A673 (cell line): ENCODE measurements at regions of chr17 and their contacts with region 1.

Region 1: DNA sequence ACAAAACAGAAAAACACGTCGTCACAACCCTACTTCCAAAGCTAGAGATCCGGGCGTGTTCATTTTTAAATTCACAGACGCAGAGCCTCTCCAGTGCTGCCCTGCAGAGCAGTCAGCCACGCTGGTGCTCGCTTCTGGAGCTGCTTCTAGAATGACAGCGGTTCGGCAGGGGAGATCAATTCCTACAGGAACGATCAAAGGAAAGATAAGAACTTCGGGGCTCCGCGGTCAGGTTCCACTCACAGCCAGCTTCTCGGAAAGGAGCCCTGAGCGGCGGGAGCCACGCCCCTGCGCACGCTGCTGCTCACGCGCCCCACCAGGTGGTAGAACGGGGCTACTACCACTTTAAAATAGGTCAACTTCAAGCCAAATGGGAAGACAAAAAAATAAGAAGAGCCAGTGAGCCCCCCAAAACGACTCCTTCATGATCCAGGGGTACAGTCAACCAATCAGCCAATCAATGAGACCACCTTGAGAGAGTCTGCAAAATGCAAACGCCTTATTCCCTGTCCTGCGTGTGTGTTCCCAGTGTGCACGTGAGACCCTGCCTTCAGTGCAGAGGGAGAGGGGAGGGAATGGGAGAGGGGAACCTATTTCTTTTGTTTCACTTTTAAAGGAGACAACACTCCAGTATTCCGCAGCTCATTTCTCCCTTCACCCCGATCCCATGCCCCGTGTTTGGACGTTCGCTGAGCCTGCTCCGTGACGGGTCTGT is 209.7 kb downstream of the RBFOX3 start:
- DNase-seq: peak; percentile 71
- H3K4me3 ChIP-seq: no peak overlapping the region
- H3K27ac ChIP-seq: no peak overlapping the region
- H3K4me1 ChIP-seq: no peaks in the 10 kb centered on the region
- H3K27me3 ChIP-seq: peaks cover 72% of the 10 kb centered on the region
- CTCF ChIP-seq: peak; percentile 89

Region 2: GRCh38 chr17:78241277-78242023 is 1159.7 kb before region 1 on chr17:
- CTCF ChIA-PET with region 1: no interaction called
- POLR2A ChIA-PET with region 1: no interaction called
- intact Hi-C with region 1: no loop called
- DNase-seq: peak; percentile 59
- H3K4me3 ChIP-seq: no peak overlapping the region
- H3K27ac ChIP-seq: no peak overlapping the region
- H3K4me1 ChIP-seq: no peaks in the 10 kb centered on the region
- H3K27me3 ChIP-seq: no peaks in the 10 kb centered on the region
- CTCF ChIP-seq: no peak

Region 3: DNA sequence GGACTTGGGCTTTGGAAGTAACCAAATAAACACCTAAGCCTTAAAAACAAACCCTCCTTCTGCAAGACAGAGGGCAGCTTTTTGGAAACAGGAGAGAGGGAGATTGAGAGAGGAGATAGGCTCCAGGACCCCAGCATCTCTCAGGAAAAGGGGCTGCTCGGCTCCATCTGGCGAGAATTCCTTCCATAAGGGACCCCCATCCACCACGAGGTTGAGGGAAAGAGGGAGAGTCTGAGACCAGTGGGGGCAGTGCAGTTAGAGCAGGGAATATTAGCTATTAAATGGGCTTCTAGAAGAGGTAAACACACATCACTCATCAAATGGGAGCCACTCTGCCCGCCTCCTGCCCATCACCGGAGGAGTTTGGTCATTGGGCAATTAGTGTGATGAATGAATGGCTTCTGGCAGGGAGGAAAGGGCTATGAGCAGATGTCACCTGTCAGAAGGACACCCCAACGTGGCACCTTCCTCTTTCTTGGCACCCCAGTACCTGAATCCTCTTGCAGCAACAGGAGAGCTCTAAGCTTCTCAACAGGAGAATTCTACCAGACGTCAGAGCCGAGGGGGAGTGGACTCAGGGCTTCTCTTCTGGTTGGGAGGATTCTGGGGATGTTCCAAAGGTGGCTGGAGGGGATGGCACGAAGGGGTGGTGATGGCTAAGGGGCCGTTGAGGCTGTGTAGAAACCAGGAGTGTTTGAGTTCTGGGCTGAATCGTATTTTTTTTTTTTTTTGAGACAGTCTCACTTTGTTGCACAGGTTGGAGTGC is 366.2 kb before region 1 on chr17:
- CTCF ChIA-PET with region 1: no interaction called
- POLR2A ChIA-PET with region 1: interaction called, 17 read pairs
- intact Hi-C with region 1: no loop called
- DNase-seq: no peak
- H3K4me3 ChIP-seq: no peak overlapping the region
- H3K27ac ChIP-seq: no peak overlapping the region
- H3K4me1 ChIP-seq: no peaks in the 10 kb centered on the region
- H3K27me3 ChIP-seq: no peaks in the 10 kb centered on the region
- CTCF ChIP-seq: no peak

Region 4: GRCh38 chr17:79294459-79295071 is 106.6 kb before region 1 on chr17:
- CTCF ChIA-PET with region 1: no interaction called
- POLR2A ChIA-PET with region 1: interaction called, 13 read pairs
- intact Hi-C with region 1: no loop called
- DNase-seq: peak; percentile 59
- H3K4me3 ChIP-seq: no peak overlapping the region
- H3K27ac ChIP-seq: no peak overlapping the region
- H3K4me1 ChIP-seq: no peaks in the 10 kb centered on the region
- H3K27me3 ChIP-seq: peaks cover 75% of the 10 kb centered on the region
- CTCF ChIP-seq: no peak

Region 5: GRCh38 chr17:79365836-79366770 is 35.0 kb before region 1 on chr17:
- CTCF ChIA-PET with region 1: no interaction called
- POLR2A ChIA-PET with region 1: no interaction called
- intact Hi-C with region 1: no loop called
- DNase-seq: no peak
- H3K4me3 ChIP-seq: no peak overlapping the region
- H3K27ac ChIP-seq: no peak overlapping the region
- H3K4me1 ChIP-seq: no peaks in the 10 kb centered on the region
- H3K27me3 ChIP-seq: peaks cover 77% of the 10 kb centered on the region
- CTCF ChIP-seq: no peak

Region 6: DNA sequence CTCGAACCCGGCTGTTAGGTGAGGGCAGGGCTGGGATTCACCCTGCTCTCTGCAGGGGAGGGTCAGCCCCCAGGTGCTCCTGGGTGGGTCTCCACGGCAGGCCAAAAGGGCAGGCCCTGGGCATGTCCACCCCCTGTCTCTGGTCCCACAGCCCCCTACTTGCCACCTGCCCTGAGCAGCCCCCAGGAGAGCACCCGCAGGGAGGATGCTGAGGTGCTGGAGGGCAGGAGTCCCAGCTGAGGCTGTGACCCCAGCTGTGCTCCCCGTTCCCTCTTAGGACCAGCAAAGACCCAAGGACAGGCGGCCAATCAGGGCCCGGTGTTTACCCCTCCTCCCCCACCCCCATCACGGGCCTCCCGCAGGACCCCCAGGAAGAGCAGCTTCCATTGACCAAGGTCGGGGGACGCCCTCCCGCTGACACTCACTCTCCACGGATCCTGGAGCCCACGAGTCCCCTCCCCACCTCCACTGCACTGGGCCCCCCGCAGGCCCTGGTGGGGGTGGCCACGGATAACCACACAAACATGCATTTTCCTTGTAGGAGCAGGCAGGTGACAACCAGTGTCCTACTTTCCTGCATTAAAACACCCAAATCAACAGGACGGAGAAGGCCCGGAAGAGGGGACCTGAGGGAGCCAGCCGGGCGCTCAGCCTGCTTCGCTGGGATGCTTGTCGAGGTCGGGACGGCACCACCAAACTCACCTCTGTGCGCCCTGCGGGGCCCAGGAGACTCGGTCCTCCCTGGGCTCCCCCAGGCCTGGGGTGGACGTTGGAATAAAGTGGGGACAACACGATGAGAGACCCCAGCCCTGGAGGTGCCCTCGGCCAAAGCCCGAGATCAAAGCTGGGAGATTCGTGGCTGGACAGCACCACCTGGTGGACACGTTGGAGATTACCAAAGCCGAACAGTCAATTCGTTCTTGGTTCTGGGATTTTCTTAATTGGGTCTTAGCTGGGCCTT is 307.1 kb after region 1 on chr17:
- CTCF ChIA-PET with region 1: interaction called, 10 read pairs
- POLR2A ChIA-PET with region 1: no interaction called
- intact Hi-C with region 1: loop called (anchors 10 kb)
- DNase-seq: peak; percentile 55
- H3K4me3 ChIP-seq: peak overlapping the region; percentile 23
- H3K27ac ChIP-seq: no peak overlapping the region
- H3K4me1 ChIP-seq: no peaks in the 10 kb centered on the region
- H3K27me3 ChIP-seq: no peaks in the 10 kb centered on the region
- CTCF ChIP-seq: peak; percentile 79

Region 7: GRCh38 chr17:80455336-80455710 is 1054.2 kb after region 1 on chr17:
- CTCF ChIA-PET with region 1: no interaction called
- POLR2A ChIA-PET with region 1: interaction called, 13 read pairs
- intact Hi-C with region 1: no loop called
- DNase-seq: no peak
- H3K4me3 ChIP-seq: peak overlapping the region; percentile 87
- H3K27ac ChIP-seq: peak overlapping the region; percentile 95
- H3K4me1 ChIP-seq: peaks cover 3% of the 10 kb centered on the region
- H3K27me3 ChIP-seq: no peaks in the 10 kb centered on the region
- CTCF ChIP-seq: no peak